Gastrocnemius medialis (tissue), 4 donors: ENCODE measurements at regions of chr1 and their contacts with region 1.

Region 1: GRCh38 chr1:21931171-21932093 is 5.7 kb downstream of the HSPG2 start:
- DNase-seq: peak in 1 of 2 donors; percentile 67
- ATAC-seq: no peak
- H3K4me3 ChIP-seq: peak overlapping the region in 3 of 4 donors; percentile 14 to 36 (median 25)
- H3K27ac ChIP-seq: peak overlapping the region; percentile 81 to 89 (median 88)
- H3K4me1 ChIP-seq: peaks cover 51 to 80% of the 10 kb centered on the region in 2 donors
- H3K27me3 ChIP-seq: no peaks in the 10 kb centered on the region
- CTCF ChIP-seq: no peak
- POLR2A ChIP-seq: peak in 1 of 2 donors; percentile 14

Region 2: GRCh38 chr1:21913763-21914162 is 17.7 kb before region 1 on chr1:
- in situ Hi-C with region 1: no loop called
- intact Hi-C with region 1: loop called (anchors 1 kb)
- DNase-seq: no peak
- ATAC-seq: peak; percentile 29 to 68
- H3K4me3 ChIP-seq: peak overlapping the region in 1 of 4 donors; percentile 4
- H3K27ac ChIP-seq: peak overlapping the region; percentile 87 to 94 (median 90)
- H3K4me1 ChIP-seq: peaks cover 71 to 85% of the 10 kb centered on the region in 2 donors
- H3K27me3 ChIP-seq: no peaks in the 10 kb centered on the region
- CTCF ChIP-seq: no peak
- POLR2A ChIP-seq: no peak

Region 3: DNA sequence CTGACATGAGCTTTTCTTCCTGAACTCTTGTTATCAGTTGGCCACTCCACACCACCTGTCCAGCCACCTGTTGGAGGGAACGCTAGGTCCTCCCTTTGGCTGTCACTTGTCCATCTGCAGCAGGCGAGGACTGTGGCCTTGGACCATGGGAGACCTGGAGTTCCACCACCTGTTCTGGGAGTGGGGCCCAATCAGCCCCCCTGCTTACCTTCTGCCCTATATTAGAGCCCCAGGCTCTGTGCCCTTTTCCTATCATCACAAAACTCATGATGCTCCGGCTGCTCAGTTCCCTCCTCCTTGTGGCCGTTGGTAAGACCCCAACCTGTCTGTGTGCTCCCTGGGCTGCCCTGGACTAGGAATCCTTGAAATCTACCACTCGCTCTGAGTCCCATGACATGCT is 70.0 kb after region 1 on chr1 and contains the start of gene CELA3A:
- in situ Hi-C with region 1: no loop called
- intact Hi-C with region 1: no loop called
- DNase-seq: no peak
- ATAC-seq: no peak
- H3K4me3 ChIP-seq: no peak within 1 kb of the TSS
- H3K27ac ChIP-seq: no peak within 1 kb of the TSS
- H3K4me1 ChIP-seq: no peaks in the 10 kb centered on the region
- H3K27me3 ChIP-seq: no peaks in the 10 kb centered on the region
- CTCF ChIP-seq: no peak
- POLR2A ChIP-seq: no peak
- total RNA-seq, gene CELA3A: not detected

Region 4: DNA sequence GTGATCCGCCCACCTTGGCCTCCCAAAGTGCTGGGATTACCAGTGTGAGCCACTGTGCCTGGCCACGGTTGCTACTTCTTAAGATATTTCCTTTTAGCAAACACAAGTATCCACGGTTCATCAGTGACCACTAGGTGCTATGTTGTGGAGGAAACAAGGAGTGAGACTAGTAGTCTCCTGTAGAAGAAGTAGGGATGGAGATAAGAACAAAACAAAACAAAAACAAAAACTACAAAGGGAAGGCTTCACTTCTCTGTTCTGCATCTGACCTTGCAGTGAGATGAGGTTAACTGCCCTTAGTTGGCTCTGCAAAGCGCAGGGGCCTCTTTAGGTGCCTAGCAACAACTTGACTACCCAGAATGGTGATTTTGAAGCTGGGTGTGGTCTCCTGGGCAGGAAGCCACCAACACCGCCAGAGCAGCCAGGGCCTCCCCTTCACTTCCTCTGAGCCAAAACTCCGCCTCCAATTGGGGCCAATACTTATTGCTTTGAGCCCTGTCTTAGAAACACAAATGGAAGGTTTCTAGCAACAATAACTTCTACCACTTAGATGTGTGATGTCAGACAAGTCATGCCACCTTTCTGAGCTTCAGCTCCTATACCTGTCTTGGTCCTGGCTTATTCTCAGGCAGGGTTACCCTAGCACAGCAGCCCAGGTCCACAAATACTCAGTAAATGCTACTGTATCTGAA is 108.3 kb after region 1 on chr1:
- in situ Hi-C with region 1: no loop called
- intact Hi-C with region 1: no loop called
- DNase-seq: peak in 1 of 2 donors; percentile 45
- ATAC-seq: no peak
- H3K4me3 ChIP-seq: no peak overlapping the region
- H3K27ac ChIP-seq: peak overlapping the region in 2 of 4 donors; percentile 4 to 8
- H3K4me1 ChIP-seq: peaks cover 10 to 12% of the 10 kb centered on the region in 2 donors
- H3K27me3 ChIP-seq: no peaks in the 10 kb centered on the region
- CTCF ChIP-seq: no peak
- POLR2A ChIP-seq: no peak